ENCODE measurements at regions of chr10 and their contacts with region 1.

Region 1: DNA sequence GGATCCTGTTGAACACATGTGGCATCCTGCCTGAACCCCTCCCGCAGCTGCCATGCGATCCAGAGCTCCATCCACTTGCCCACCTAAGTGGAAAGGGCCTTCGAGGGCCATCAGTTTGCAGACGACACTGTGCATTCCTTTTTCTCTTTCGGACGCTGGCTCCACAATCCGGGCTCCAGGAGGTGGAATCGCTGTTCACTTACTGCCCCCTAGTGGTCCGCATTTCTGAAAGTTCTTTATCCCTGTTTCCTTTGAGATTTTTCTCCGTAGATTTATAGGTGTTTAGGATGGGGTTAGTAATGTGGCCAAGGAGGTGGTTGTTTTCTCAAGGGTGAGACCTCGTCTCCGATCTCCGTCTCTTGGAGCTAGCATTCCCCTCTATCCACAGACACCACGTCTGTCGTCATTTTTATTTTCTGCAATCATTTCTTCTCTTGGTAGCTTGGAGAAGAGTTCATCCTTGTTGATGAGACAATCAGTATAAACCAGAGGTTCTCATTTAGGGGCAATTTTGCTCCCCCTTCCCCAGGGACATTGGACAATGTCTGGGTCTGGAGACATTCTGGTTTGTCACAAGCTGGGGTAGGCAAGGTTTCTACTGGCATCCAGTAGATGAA is 204.6 kb downstream of the ARHGAP21 start:
- DNase-seq: peak; percentile 38
- H3K4me3 Mint-ChIP-seq: no peak overlapping the region
- H3K27ac Mint-ChIP-seq: no peak overlapping the region
- H3K4me1 Mint-ChIP-seq: peaks cover 6% of the 10 kb centered on the region
- H3K27me3 Mint-ChIP-seq: no peaks in the 10 kb centered on the region

Region 2: GRCh38 chr10:24503461-24504320 is 15.4 kb before region 1 on chr10:
- CTCF ChIA-PET with region 1: interaction called, 33 read pairs
- POLR2A ChIA-PET with region 1: no interaction called
- DNase-seq: peak; percentile 51
- H3K4me3 Mint-ChIP-seq: no peak overlapping the region
- H3K27ac Mint-ChIP-seq: no peak overlapping the region
- H3K4me1 Mint-ChIP-seq: no peaks in the 10 kb centered on the region
- H3K27me3 Mint-ChIP-seq: peaks cover 5% of the 10 kb centered on the region

Region 3: GRCh38 chr10:24579906-24580305 is 60.8 kb after region 1 on chr10:
- CTCF ChIA-PET with region 1: no interaction called
- POLR2A ChIA-PET with region 1: no interaction called
- DNase-seq: no peak
- H3K4me3 Mint-ChIP-seq: no peak overlapping the region
- H3K27ac Mint-ChIP-seq: no peak overlapping the region
- H3K4me1 Mint-ChIP-seq: peaks cover 9% of the 10 kb centered on the region
- H3K27me3 Mint-ChIP-seq: peaks cover 15% of the 10 kb centered on the region

Region 4: GRCh38 chr10:24882047-24882698 is 363.1 kb after region 1 on chr10:
- CTCF ChIA-PET with region 1: no interaction called
- POLR2A ChIA-PET with region 1: no interaction called
- DNase-seq: peak; percentile 47
- H3K4me3 Mint-ChIP-seq: peak overlapping the region; percentile 29
- H3K27ac Mint-ChIP-seq: peak overlapping the region; percentile 55
- H3K4me1 Mint-ChIP-seq: peaks cover 28% of the 10 kb centered on the region
- H3K27me3 Mint-ChIP-seq: no peaks in the 10 kb centered on the region